Activated naive CD4-positive, alpha-beta T cell treated with anti-CD3 and anti-CD28 coated beads, Interleukin-2, amount 10 ng/mL, durations not matched to agents 7 days and 5 days (primary cell): ENCODE measurements at regions of chr2 and their contacts with region 1.

Region 1: GRCh38 chr2:236569573-236569973 is at the start of gene ACKR3:
- DNase-seq: peak; percentile 85
- H3K4me3 Mint-ChIP-seq: peak within 1 kb of the TSS; percentile 38
- H3K27ac Mint-ChIP-seq: peak within 1 kb of the TSS; percentile 66
- H3K4me1 Mint-ChIP-seq: peaks cover 35% of the 10 kb centered on the region
- H3K27me3 Mint-ChIP-seq: peaks cover 25% of the 10 kb centered on the region

Region 2: GRCh38 chr2:236352761-236353593 is 216.6 kb before region 1 on chr2:
- CTCF ChIA-PET with region 1: interaction called, 10 read pairs
- DNase-seq: peak; percentile 54
- H3K4me3 Mint-ChIP-seq: no peak overlapping the region
- H3K27ac Mint-ChIP-seq: no peak overlapping the region
- H3K4me1 Mint-ChIP-seq: peaks cover 4% of the 10 kb centered on the region
- H3K27me3 Mint-ChIP-seq: peaks cover 27% of the 10 kb centered on the region

Region 3: DNA sequence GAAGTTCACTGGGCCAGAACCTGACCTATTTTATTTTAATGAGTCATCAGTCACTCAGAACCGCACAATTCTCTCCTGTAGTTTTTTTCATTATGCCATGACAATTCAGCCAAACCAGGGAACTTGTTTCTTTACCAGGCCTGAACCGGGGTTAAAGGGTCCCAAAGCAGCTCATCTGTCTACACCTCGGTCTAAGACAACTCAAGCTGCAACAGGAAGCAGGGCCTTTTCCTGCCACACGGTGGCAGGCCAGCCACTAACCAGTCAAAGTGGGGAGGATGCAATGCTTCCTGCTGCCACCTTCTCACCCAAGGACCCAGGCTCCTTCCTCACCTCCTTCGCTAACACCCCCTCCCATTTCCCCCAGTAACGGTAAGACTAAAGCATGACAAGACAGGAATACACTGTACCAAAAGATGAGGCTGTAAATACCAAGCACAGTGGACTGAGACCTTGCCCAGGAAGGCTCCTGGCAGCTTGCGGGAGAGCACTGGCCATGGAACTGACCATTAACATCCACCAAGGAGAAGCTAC is 56.6 kb before region 1 on chr2:
- CTCF ChIA-PET with region 1: interaction called, 214 read pairs
- DNase-seq: peak; percentile 83
- H3K4me3 Mint-ChIP-seq: no peak overlapping the region
- H3K27ac Mint-ChIP-seq: no peak overlapping the region
- H3K4me1 Mint-ChIP-seq: peaks cover 4% of the 10 kb centered on the region
- H3K27me3 Mint-ChIP-seq: peaks cover 34% of the 10 kb centered on the region

Region 4: DNA sequence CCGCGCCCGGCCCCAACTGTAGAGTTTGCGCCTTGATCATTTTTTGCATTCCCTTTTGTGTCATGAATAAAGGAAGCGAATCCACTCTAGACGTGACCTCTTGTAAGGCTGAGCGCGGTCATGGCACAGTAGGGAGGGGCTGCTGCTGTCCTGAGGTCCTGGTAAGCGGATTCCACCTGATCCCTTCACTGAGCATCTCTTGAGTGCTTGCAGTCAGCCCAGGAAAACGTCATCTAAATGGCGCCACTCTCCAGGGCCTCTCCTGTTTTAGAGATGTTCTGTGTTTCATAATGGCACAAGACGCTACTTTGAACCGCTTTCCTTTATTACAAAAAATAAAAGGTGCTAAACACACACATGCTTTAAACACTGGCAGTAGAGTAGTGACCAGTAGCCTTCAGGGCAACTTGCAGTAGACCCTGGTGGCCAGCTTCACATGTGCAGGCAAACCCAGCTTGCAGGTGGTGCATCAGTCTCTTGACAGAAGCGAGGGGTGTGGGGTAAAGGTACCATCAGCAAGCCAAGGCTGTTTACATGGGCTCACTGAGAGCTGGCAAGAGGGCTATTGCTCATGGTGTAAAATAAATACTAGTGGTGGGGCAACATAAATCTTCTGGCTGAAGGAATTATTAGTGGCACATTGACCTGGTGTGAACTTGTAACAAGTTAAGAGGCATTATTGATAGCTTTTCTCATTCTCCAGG is 43.0 kb before region 1 on chr2:
- CTCF ChIA-PET with region 1: interaction called, 12 read pairs
- DNase-seq: no peak
- H3K4me3 Mint-ChIP-seq: no peak overlapping the region
- H3K27ac Mint-ChIP-seq: no peak overlapping the region
- H3K4me1 Mint-ChIP-seq: peaks cover under 1% of the 10 kb centered on the region
- H3K27me3 Mint-ChIP-seq: peaks cover 38% of the 10 kb centered on the region

Region 5: GRCh38 chr2:236536727-236537398 is 32.7 kb before region 1 on chr2:
- CTCF ChIA-PET with region 1: interaction called, 23 read pairs
- DNase-seq: peak; percentile 75
- H3K4me3 Mint-ChIP-seq: peak overlapping the region; percentile 99
- H3K27ac Mint-ChIP-seq: peak overlapping the region; percentile 94
- H3K4me1 Mint-ChIP-seq: peaks cover 57% of the 10 kb centered on the region
- H3K27me3 Mint-ChIP-seq: peaks cover 8% of the 10 kb centered on the region

Region 6: DNA sequence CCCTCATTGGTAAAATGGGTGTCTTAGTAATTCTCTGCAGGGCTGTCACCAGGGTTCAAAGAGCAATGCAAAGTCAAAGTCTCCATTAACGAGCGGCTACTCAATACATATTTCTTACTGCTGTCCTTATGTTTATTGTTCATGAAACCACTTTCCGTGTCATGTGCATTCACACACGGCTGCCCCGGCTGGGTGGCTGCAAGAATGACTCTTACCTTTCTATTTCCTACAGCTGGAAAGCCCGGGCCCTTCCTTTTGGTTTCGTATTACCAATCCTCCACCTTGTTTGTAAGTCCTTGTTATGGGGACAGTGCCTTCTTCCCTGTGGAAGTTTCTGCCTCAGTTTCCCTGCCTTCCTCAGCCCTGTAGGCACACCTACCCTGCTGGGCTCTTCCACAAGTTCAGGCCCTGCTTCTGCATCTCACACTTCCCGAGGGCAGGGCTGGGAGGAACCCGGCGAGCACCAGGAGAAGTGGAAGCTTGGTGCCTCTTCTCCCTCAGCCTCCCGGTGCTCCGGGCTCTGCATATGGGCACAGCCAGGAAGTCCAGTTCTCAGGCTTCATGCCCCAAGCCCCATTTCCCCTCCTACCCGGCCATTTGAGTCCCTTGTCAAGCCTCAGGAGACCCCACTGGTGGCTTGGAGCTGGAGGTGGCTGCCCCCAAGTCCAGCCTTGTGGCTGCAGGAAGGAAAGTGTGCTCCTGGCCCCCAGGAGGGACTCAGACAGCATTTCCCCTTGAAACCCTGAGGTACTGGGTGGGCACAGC is 18.7 kb before region 1 on chr2:
- CTCF ChIA-PET with region 1: interaction called, 16 read pairs
- DNase-seq: no peak
- H3K4me3 Mint-ChIP-seq: no peak overlapping the region
- H3K27ac Mint-ChIP-seq: peak overlapping the region; percentile 37
- H3K4me1 Mint-ChIP-seq: peaks cover 99% of the 10 kb centered on the region
- H3K27me3 Mint-ChIP-seq: no peaks in the 10 kb centered on the region

Region 7: DNA sequence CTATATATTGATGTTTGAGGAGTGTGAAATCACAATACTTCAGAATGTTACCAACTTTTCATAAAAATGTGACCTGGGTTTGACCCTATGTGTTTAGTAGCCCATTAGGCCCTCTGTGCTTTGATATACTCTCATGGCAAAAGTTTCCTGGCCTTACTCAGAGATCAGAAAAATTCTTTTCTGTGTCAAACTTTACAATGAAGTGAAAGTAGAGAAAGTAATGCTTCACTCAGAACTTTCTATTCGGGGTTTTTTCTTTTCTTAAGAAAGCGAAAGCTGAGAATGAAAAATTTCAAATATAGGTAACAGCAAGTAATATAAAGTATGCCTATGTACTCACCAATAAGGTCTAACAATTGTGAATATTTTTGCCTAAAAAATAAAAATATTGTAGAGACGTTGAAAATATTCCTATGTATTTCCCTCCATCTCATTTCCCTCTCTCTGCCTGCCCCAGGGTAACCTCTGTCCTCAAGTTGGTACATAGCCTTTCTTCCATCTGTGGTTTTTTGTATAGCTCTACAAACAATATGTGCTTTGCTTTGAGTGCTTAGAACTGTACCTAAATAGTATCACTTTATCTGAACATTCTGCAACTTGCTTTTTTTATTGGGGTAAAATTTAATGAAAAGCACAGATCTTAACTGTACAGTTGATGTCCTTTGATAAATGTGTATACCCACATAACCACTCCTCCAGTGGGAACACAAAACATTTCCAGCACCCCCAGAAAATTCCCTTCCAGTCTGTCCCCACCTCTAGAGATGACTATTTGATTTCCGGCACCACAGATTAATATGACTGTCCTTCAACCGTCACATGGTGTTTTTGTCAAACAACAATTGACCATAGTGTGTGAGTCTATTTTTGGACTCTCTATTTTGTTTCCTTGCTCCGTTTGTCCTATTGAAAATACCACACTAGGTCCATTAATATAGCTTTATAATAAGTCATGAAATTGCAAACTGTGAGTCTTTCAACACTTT is 10.3 kb before region 1 on chr2:
- CTCF ChIA-PET with region 1: interaction called, 19 read pairs
- DNase-seq: no peak
- H3K4me3 Mint-ChIP-seq: no peak overlapping the region
- H3K27ac Mint-ChIP-seq: peak overlapping the region; percentile 56
- H3K4me1 Mint-ChIP-seq: peaks cover 47% of the 10 kb centered on the region
- H3K27me3 Mint-ChIP-seq: no peaks in the 10 kb centered on the region